Activated CD8-positive, alpha-beta memory T cell treated with anti-CD3 and anti-CD28 coated beads, Interleukin-2, amount 10 ng/mL, durations not matched to agents 7 days and 5 days (primary cell): ENCODE measurements at regions of chr16 and their contacts with region 1.

Region 1: GRCh38 chr16:82229796-82230619 is 60.0 kb upstream of the MPHOSPH6 start:
- DNase-seq: peak; percentile 67
- ATAC-seq: peak; percentile 47
- H3K4me3 Mint-ChIP-seq: no peak overlapping the region
- H3K27ac Mint-ChIP-seq: no peak overlapping the region
- H3K4me1 Mint-ChIP-seq: no peaks in the 10 kb centered on the region
- H3K27me3 Mint-ChIP-seq: peaks cover 29% of the 10 kb centered on the region

Region 2: GRCh38 chr16:81885976-81886586 is 343.9 kb before region 1 on chr16:
- CTCF ChIA-PET with region 1: interaction called, 26 read pairs
- DNase-seq: peak; percentile 45
- ATAC-seq: peak; percentile 69
- H3K4me3 Mint-ChIP-seq: no peak overlapping the region
- H3K27ac Mint-ChIP-seq: no peak overlapping the region
- H3K4me1 Mint-ChIP-seq: peaks cover 4% of the 10 kb centered on the region
- H3K27me3 Mint-ChIP-seq: no peaks in the 10 kb centered on the region

Region 3: DNA sequence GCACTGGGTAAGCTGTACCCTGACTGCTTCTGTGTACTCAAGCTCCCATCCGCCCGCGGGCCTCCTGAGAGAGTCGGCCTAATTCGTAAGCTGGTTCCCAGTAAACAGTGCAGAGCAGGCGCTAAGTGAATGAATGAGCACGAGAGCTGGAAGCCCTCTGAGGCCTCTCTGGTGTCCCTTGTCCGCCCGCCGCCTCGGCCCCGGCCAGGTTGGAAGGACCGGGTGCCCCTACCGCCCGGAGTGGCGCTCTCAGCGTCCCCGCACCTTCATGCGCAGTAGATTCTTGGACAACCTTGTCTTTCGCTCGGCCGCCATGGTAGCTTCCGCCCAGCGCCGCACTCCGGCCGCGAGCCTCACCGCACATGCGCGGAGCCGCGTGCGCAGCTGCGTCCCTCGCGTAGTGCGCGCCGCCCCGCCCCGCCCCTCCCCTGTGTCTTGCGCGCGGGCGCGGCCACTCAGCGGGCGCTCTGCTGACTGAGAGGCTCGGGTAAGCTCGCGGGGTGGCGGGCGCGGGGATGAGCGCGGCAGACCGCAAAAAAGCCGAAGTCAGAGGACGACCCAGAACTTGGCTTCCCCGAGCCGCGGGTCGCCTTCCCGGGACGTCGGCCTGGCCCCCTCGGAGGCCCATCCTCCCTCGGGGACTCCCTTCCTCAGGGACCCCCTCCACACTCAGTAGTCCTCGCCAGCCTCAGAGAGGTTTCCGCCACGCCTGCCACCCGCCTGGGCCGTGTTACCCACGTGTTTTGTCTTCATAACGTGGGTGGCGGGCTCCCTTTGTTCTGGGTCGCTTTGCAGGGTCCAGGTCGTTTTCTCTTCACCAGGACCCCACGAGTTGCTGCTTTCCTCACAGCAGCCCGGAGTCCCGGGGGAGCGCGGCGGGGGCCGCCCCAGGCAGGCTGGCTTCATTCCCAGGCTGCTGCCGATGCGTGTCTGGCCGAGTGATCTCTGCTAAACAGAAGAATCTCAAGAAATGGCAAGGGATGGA is 59.9 kb before region 1 on chr16 and contains the start of gene MPHOSPH6:
- CTCF ChIA-PET with region 1: interaction called, 12 read pairs
- DNase-seq: peak; percentile 92
- ATAC-seq: peak; percentile 97
- H3K4me3 Mint-ChIP-seq: peak within 1 kb of the TSS; percentile 86
- H3K27ac Mint-ChIP-seq: peak within 1 kb of the TSS; percentile 87
- H3K4me1 Mint-ChIP-seq: peaks cover 20% of the 10 kb centered on the region
- H3K27me3 Mint-ChIP-seq: peaks cover 34% of the 10 kb centered on the region
- total RNA-seq, gene MPHOSPH6: 26.1 to 32.1 TPM

Region 4: GRCh38 chr16:82240111-82240510 is 10.1 kb after region 1 on chr16:
- CTCF ChIA-PET with region 1: interaction called, 16 read pairs
- DNase-seq: no peak
- ATAC-seq: no peak
- H3K4me3 Mint-ChIP-seq: no peak overlapping the region
- H3K27ac Mint-ChIP-seq: no peak overlapping the region
- H3K4me1 Mint-ChIP-seq: peaks cover 5% of the 10 kb centered on the region
- H3K27me3 Mint-ChIP-seq: peaks cover 41% of the 10 kb centered on the region